Heart left ventricle (tissue), 16 donors: ENCODE measurements at regions of chr16 and their contacts with region 1.

Region 1: GRCh38 chr16:18999045-18999393 is 15.3 kb downstream of the TMC7 start:
- DNase-seq: no peak
- ATAC-seq: no peak
- H3K4me3 ChIP-seq: no peak overlapping the region
- H3K27ac ChIP-seq: no peak overlapping the region
- H3K4me1 ChIP-seq: peaks cover 0 to 6% (median 0%) of the 10 kb centered on the region in 12 donors
- H3K27me3 ChIP-seq: no peaks in the 10 kb centered on the region
- CTCF ChIP-seq: no peak
- POLR2A ChIP-seq: no peak

Region 2: GRCh38 chr16:18945233-18945632 is 53.8 kb before region 1 on chr16:
- intact Hi-C with region 1: no loop called
- DNase-seq: no peak
- ATAC-seq: no peak
- H3K4me3 ChIP-seq: no peak overlapping the region
- H3K27ac ChIP-seq: no peak overlapping the region
- H3K4me1 ChIP-seq: peaks cover 0 to 6% (median 0%) of the 10 kb centered on the region in 12 donors
- H3K27me3 ChIP-seq: no peaks in the 10 kb centered on the region
- CTCF ChIP-seq: no peak
- POLR2A ChIP-seq: no peak

Region 3: GRCh38 chr16:19375561-19376158 is 376.6 kb after region 1 on chr16:
- intact Hi-C with region 1: loop called in 1 of 10 experiments (anchors 10 kb)
- DNase-seq: peak in 3 of 5 donors; percentile 19 to 32 (median 28)
- ATAC-seq: peak in 3 of 4 donors; percentile 59 to 75 (median 71)
- H3K4me3 ChIP-seq: no peak overlapping the region
- H3K27ac ChIP-seq: no peak overlapping the region
- H3K4me1 ChIP-seq: peaks cover 0 to 3% (median 0%) of the 10 kb centered on the region in 12 donors
- H3K27me3 ChIP-seq: no peaks in the 10 kb centered on the region
- CTCF ChIP-seq: peak; percentile 77 to 93 (median 82)
- POLR2A ChIP-seq: no peak